ENCODE measurements at regions of chr5 and their contacts with region 1.

Region 1: DNA sequence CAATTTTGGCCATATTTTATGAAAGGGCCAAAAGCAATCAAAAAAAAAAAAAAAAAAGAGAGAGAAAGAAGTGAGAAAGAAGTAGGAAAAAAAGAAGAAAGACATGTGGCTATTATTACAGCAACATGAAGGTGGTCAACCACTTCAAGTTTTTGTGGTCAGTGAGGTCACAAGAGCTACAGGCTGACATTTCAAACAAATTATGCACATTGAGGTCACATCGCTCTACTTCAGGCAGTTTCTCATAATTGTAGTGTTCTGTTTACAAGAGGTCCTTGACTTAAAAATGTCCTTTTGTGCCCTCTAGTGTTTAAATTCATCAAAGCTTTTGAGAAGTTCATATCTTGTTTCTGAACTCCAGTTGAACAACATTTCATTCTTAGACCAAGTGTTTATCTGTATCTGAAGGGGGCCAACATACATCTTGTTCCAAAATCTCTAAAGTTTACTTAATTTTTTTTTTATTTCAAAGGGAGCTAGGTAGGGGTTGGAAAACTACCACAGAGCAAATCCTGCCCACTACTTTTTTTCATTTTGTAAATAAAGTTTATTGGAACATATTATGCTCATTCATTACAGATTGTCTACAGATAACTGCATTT is 513.1 kb downstream of the PDE4D start:
- DNase-seq: no peak

Region 2: GRCh38 chr5:59193616-59194319 is 186.7 kb before region 1 on chr5:
- intact Hi-C with region 1: loop called (anchors 5 kb)
- DNase-seq: no peak

Region 3: GRCh38 chr5:59810041-59810440 is 429.6 kb after region 1 on chr5:
- intact Hi-C with region 1: no loop called
- DNase-seq: peak; percentile 70 to 93 (median 85)

Measured in head of caudate nucleus (tissue), 42 donors.